Heart right ventricle (tissue), 16 donors: ENCODE measurements at regions of chr17 and their contacts with region 1.

Region 1: DNA sequence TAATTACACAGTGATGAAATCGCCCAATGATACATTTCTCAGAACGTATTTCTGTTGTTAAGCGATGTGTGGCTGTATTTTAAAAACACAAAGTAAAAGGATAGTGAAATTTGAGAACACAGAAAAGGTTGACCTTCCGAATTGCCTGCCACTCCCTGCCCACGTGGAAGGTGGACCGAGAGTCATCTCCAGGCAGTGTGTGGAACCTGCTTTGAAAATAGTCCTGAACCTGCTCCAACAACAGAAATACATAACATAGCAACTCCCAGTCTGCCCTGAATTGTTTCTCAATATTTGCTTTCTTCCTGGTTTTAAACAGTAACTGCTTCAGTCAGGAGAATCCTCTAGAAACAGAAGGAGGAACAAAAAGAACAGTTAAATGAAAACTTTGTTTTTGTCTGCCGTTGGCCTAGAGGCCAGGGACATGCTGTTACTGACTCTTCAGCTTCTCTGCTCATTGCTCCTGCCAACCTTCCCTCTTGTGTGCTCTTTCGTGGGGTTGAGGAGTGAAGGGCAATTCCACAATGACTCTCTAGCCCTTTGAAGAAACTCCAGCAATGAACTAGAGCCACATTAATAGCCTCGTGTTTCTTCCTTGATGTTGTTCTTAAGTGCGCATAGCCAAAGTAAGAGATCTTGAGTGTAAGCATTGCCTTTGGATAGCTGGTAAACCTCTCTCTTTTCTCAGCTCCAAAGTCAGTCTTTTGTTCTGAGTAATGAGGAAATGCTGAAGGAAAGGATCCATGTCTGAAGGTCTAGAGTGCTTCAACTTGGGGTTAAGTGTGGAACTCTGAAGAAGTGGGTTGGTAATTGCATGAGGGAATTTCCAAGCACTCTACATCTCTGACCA is 452.5 kb upstream of the CCL2 start:
- DNase-seq: no peak
- ATAC-seq: peak in 2 of 8 donors; percentile 25 to 49
- H3K4me3 ChIP-seq: no peak overlapping the region
- H3K27ac ChIP-seq: peak overlapping the region in 1 of 10 donors; percentile 56
- H3K4me1 ChIP-seq: peaks cover 0 to 8% (median 0%) of the 10 kb centered on the region in 9 donors
- H3K27me3 ChIP-seq: peaks cover 0 to 35% (median 7%) of the 10 kb centered on the region in 7 donors
- CTCF ChIP-seq: no peak

Region 2: DNA sequence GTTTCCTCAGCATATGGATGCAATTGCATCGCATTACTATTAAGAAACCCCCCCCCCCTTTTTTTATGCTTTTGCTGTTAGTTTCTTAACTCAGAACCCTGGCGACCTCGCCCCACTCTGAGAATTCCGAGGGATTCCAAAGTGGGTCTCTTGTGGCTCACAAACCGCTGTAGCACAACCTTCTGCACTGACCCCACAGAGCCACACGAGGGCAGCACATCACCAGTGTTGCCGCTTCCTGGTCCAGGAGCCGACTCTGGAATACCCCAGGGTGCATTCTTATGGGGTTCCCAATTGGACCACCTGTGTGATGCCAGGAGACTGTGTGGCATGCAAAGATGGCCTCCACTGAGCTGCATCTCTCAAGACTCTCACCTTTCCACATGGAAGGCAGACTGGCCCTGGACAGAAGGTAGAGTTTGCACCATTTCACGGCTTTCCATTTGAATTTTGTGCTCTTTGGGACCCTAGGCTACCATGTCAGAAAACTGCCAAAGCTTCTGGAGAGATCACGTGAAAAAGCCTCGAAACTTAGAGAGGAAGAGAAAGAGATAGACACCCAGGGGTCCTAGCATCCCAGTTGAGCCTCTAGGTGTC is 76.8 kb before region 1 on chr17:
- intact Hi-C with region 1: no loop called
- DNase-seq: peak; percentile 10 to 29
- ATAC-seq: peak in 1 of 8 donors; percentile 17
- H3K4me3 ChIP-seq: no peak overlapping the region
- H3K27ac ChIP-seq: no peak overlapping the region
- H3K4me1 ChIP-seq: no peaks in the 10 kb centered on the region
- H3K27me3 ChIP-seq: peaks cover 0 to 65% (median 37%) of the 10 kb centered on the region in 7 donors
- CTCF ChIP-seq: peak; percentile 15 to 67 (median 58)

Region 3: GRCh38 chr17:33864758-33865229 is 62.2 kb after region 1 on chr17:
- intact Hi-C with region 1: loop called in 1 of 10 experiments (anchors 10 kb)
- DNase-seq: no peak
- ATAC-seq: no peak
- H3K4me3 ChIP-seq: no peak overlapping the region
- H3K27ac ChIP-seq: no peak overlapping the region
- H3K4me1 ChIP-seq: no peaks in the 10 kb centered on the region
- H3K27me3 ChIP-seq: peaks cover 0 to 26% (median 14%) of the 10 kb centered on the region in 7 donors
- CTCF ChIP-seq: no peak